ENCODE measurements at regions of chr2 and their contacts with region 1.

Region 1: GRCh38 chr2:264660-265468 is at the start of gene ACP1:
- DNase-seq: peak; percentile 96
- ATAC-seq: peak; percentile 95
- H3K4me3 Mint-ChIP-seq: peak within 1 kb of the TSS; percentile 92
- H3K27ac Mint-ChIP-seq: peak within 1 kb of the TSS; percentile 87
- H3K4me1 Mint-ChIP-seq: peaks cover 46% of the 10 kb centered on the region
- H3K27me3 Mint-ChIP-seq: no peaks in the 10 kb centered on the region
- total RNA-seq, gene ACP1: 136 to 139 TPM

Region 2: DNA sequence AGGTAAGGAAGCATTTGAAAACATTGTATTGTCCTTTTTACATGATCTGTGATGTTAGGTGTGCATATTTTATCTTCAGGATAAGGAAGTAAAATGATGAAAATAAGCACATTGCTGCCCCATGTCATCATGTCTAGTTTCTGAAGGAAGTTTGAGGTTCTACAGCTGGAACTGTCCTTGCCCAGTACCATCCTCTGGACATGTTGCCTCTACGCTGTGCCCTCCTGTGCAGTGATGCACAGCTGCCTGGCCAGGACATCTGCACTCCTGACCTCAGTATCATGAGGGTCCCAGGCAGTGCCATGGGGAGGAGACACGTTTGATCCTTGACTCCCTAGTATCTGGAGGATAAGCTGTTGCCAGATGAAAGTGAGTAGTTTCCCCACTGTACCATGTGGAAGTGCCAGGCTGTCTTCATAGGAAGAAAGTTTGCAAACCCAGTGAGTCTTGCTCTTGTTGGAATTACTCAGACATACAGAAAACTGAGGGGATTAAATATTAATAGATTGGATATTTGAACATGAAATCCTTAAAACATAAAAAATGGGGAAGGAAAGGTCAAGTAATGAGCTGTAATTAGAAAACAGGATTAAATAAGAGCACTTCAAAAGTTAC is 13.6 kb after region 1 on chr2:
- CTCF ChIA-PET with region 1: no interaction called
- POLR2A ChIA-PET with region 1: no interaction called
- intact Hi-C with region 1: no loop called
- DNase-seq: no peak
- ATAC-seq: no peak
- H3K4me3 Mint-ChIP-seq: no peak overlapping the region
- H3K27ac Mint-ChIP-seq: no peak overlapping the region
- H3K4me1 Mint-ChIP-seq: no peaks in the 10 kb centered on the region
- H3K27me3 Mint-ChIP-seq: no peaks in the 10 kb centered on the region

Region 3: GRCh38 chr2:290090-290722 is 25.3 kb after region 1 on chr2:
- CTCF ChIA-PET with region 1: no interaction called
- POLR2A ChIA-PET with region 1: interaction called, 3 read pairs
- intact Hi-C with region 1: loop called in 1 of 2 experiments (anchors 2 kb)
- DNase-seq: peak; percentile 74
- ATAC-seq: peak; percentile 61
- H3K4me3 Mint-ChIP-seq: peak overlapping the region; percentile 50
- H3K27ac Mint-ChIP-seq: no peak overlapping the region
- H3K4me1 Mint-ChIP-seq: peaks cover 5% of the 10 kb centered on the region
- H3K27me3 Mint-ChIP-seq: peaks cover 41% of the 10 kb centered on the region

Region 4: DNA sequence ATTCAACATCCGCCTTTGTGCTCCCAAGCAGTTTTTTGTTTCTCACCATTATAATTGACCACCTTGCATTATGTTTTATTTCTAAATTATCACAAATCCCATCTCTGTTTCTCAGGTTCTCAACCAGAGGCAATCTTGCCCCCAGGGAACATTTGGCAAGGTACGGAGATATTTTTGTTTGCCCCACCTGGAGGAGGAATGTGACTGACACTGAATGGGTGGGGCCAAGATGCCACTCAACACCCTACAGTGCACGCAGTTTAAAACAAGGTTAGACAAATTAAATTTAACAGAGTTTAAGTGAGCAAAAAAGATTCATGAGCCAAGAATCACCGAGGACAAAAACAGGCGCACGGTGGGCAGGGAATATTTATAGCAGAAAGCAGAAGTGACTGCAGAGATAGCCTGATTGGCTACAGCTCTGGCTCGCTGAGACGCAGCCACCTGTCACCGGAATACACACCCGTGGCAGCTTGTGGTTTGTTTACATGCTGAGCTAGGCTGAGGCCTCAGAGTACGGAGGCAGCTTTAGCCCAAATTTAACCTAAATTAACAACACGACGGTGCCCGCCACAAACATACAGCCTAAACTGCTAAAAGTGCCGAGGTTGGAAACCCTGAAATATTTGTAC is 173.0 kb after region 1 on chr2:
- CTCF ChIA-PET with region 1: no interaction called
- POLR2A ChIA-PET with region 1: no interaction called
- intact Hi-C with region 1: loop called in 1 of 2 experiments (anchors 2 kb)
- DNase-seq: peak; percentile 74
- ATAC-seq: peak; percentile 96
- H3K4me3 Mint-ChIP-seq: peak overlapping the region; percentile 59
- H3K27ac Mint-ChIP-seq: no peak overlapping the region
- H3K4me1 Mint-ChIP-seq: peaks cover 19% of the 10 kb centered on the region
- H3K27me3 Mint-ChIP-seq: no peaks in the 10 kb centered on the region

Region 5: DNA sequence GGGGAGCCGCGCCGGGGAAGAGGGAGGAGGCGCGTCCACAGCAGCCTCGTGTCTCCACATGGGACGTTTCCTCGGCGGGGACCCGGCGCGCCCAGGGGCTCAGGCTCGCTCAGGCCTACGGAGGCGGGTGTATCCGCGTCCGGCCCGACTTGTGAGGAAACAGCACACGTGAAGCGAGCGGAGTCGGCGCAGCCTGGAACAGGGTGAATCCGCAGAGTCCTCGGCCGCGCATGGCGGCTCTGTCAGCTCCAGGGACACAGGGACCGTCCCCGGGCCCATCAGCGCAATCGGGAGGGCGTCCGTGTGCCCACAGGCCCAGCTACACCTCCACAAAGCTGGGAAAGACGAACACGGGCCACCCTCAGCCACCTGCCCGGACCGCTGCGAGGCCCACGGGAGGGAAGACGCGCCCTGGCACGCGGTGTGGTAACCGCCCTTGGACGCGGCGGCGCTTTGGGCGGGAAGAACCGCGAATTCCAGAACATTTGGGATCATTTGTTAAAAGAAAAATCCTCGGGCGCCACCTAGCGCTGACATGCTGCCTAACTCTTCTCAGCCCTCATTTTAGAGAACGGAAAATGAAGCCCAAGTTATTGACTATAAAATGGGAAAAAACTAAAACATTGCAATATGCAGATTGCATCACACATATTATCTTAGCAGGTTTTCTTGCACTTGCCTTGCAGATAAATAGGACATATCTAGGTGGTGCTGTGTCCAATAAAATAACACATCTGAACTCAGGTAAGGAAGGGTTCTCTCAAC is 372.0 kb after region 1 on chr2:
- CTCF ChIA-PET with region 1: no interaction called
- POLR2A ChIA-PET with region 1: no interaction called
- intact Hi-C with region 1: loop called in 1 of 2 experiments (anchors 10 kb)
- DNase-seq: peak; percentile 72
- ATAC-seq: peak; percentile 76
- H3K4me3 Mint-ChIP-seq: peak overlapping the region; percentile 51
- H3K27ac Mint-ChIP-seq: no peak overlapping the region
- H3K4me1 Mint-ChIP-seq: peaks cover 6% of the 10 kb centered on the region
- H3K27me3 Mint-ChIP-seq: no peaks in the 10 kb centered on the region

Region 6: GRCh38 chr2:660586-661359 is 395.9 kb after region 1 on chr2:
- CTCF ChIA-PET with region 1: no interaction called
- POLR2A ChIA-PET with region 1: no interaction called
- intact Hi-C with region 1: loop called in 1 of 2 experiments (anchors 5 kb)
- DNase-seq: no peak
- ATAC-seq: no peak
- H3K4me3 Mint-ChIP-seq: no peak overlapping the region
- H3K27ac Mint-ChIP-seq: no peak overlapping the region
- H3K4me1 Mint-ChIP-seq: peaks cover 43% of the 10 kb centered on the region
- H3K27me3 Mint-ChIP-seq: no peaks in the 10 kb centered on the region